Vagina (tissue), 2 donors: ENCODE measurements at regions of chr6 and their contacts with region 1.

Region 1: GRCh38 chr6:18122124-18123093 is at the start of gene NHLRC1:
- DNase-seq: no peak
- H3K4me3 ChIP-seq: peak within 1 kb of the TSS; percentile 63 to 67
- H3K27ac ChIP-seq: peak within 1 kb of the TSS; percentile 65
- H3K4me1 ChIP-seq: peaks cover 14% of the 10 kb centered on the region
- H3K27me3 ChIP-seq: no peaks in the 10 kb centered on the region
- CTCF ChIP-seq: peak; percentile 75 to 96 (median 90)
- POLR2A ChIP-seq: no peak
- total RNA-seq, gene NHLRC1: 0.74 TPM

Region 2: DNA sequence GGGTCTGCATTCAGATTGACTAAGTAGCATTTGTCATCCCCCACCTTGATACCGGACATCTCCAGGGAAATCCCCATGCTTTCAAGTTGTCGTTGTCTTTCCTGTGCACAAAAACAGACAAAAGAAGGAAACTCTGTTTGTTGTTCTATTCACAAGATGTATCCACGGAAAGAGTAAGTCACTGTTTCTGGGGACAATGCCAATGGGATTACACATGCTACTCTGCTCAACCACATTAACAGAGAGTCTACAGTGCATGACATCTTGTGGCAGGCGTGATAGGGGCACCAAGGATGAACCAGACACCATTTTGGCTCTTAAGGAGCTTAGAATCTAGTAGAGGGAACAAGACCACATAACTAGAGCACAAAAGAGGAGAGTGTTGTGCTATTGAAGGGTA is 291.3 kb before region 1 on chr6:
- intact Hi-C with region 1: loop called (anchors 10 kb)
- DNase-seq: no peak
- H3K4me3 ChIP-seq: no peak overlapping the region
- H3K27ac ChIP-seq: no peak overlapping the region
- H3K4me1 ChIP-seq: no peaks in the 10 kb centered on the region
- H3K27me3 ChIP-seq: no peaks in the 10 kb centered on the region
- CTCF ChIP-seq: no peak
- POLR2A ChIP-seq: no peak

Region 3: DNA sequence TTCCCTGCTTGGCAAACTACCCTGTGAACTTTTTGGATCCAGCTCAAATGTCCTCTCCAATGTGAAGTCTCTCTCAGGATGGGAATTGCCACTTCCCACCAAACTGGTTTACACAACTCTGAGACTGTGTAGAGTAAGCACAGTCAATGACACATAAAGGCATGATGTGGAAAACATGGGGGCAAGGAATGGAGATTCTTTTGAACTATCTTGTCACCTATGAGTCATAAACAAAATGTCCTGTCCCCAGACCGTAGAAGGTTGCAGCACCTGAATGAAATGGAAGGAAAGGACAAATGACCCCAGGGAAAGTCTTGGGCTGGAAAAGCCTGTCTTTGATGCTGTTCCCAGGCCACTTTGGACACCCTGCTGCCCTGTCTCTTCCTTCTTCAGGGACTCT is 124.0 kb before region 1 on chr6:
- intact Hi-C with region 1: loop called (anchors 10 kb)
- DNase-seq: peak in 1 of 2 donors; percentile 22
- H3K4me3 ChIP-seq: no peak overlapping the region
- H3K27ac ChIP-seq: no peak overlapping the region
- H3K4me1 ChIP-seq: peaks cover 13% of the 10 kb centered on the region
- H3K27me3 ChIP-seq: no peaks in the 10 kb centered on the region
- CTCF ChIP-seq: no peak
- POLR2A ChIP-seq: no peak

Region 4: GRCh38 chr6:19452495-19452894 is 1330.1 kb after region 1 on chr6:
- intact Hi-C with region 1: no loop called
- DNase-seq: no peak
- H3K4me3 ChIP-seq: no peak overlapping the region
- H3K27ac ChIP-seq: no peak overlapping the region
- H3K4me1 ChIP-seq: no peaks in the 10 kb centered on the region
- H3K27me3 ChIP-seq: no peaks in the 10 kb centered on the region
- CTCF ChIP-seq: no peak
- POLR2A ChIP-seq: no peak